ENCODE measurements at regions of chr16 and their contacts with region 1.

Region 1: GRCh38 chr16:49491771-49492761 is 118.5 kb downstream of the C16orf78 start:
- DNase-seq: no peak
- ATAC-seq: peak; percentile 89
- H3K4me3 ChIP-seq: no peak overlapping the region
- H3K27ac ChIP-seq: no peak overlapping the region
- H3K4me1 ChIP-seq: no peaks in the 10 kb centered on the region
- H3K27me3 ChIP-seq: no peaks in the 10 kb centered on the region
- CTCF ChIP-seq: peak; percentile 62 to 84 (median 78)
- EP300 ChIP-seq: no peak
- POLR2A ChIP-seq: no peak
- RAD21 ChIP-seq: peak; percentile 52

Region 2: DNA sequence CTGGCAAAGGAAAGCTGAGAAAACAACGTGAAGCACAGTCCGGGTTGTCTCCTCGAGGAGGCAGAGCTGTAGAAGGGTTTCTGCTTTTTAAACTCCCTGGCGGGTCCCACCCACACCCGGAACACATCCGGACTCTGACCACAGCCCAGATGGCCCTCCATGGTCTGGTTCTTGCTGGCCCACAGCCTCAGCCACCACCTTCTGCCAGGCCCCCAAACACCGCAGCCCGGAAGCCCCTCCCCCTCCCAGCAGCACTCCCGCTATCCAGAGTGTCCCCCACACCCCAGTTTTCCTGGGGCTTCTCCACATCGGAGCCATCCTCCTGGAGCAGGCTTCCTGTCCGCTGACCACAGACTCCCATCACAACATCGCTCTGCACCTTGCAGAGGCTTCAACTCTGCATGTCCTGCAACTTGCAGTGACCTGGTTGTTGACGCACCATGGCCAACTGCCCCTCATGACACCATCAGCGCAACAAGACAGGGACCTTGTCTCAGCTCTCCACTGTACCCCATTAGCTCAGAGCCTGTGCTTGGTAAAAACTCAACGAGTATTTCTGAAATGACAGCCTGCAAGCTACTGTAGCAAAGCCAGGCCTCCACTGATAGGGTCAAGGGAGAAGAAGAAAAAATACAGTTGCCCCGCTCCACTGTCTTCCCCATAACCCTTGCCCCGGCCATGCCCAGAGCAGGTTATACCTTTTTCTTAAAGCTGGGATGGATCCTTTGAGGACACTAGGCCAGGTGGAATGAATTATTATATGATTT is 11.4 kb after region 1 on chr16:
- CTCF ChIA-PET with region 1: no interaction called
- POLR2A ChIA-PET with region 1: no interaction called
- RAD21 ChIA-PET with region 1: no interaction called
- SMC1A ChIA-PET with region 1: no interaction called
- in situ Hi-C with region 1: no loop called
- intact Hi-C with region 1: no loop called
- DNase-seq: no peak
- ATAC-seq: peak; percentile 85
- H3K4me3 ChIP-seq: no peak overlapping the region
- H3K27ac ChIP-seq: no peak overlapping the region
- H3K4me1 ChIP-seq: peaks cover 14% of the 10 kb centered on the region
- H3K27me3 ChIP-seq: no peaks in the 10 kb centered on the region
- CTCF ChIP-seq: no peak
- EP300 ChIP-seq: no peak
- POLR2A ChIP-seq: no peak
- RAD21 ChIP-seq: no peak

Region 3: GRCh38 chr16:49580751-49581303 is 88.8 kb after region 1 on chr16:
- CTCF ChIA-PET with region 1: no interaction called
- POLR2A ChIA-PET with region 1: no interaction called
- RAD21 ChIA-PET with region 1: no interaction called
- SMC1A ChIA-PET with region 1: no interaction called
- in situ Hi-C with region 1: loop called (anchors 5 kb)
- intact Hi-C with region 1: no loop called
- DNase-seq: no peak
- ATAC-seq: no peak
- H3K4me3 ChIP-seq: no peak overlapping the region
- H3K27ac ChIP-seq: no peak overlapping the region
- H3K4me1 ChIP-seq: no peaks in the 10 kb centered on the region
- H3K27me3 ChIP-seq: no peaks in the 10 kb centered on the region
- CTCF ChIP-seq: no peak
- EP300 ChIP-seq: no peak
- POLR2A ChIP-seq: no peak
- RAD21 ChIP-seq: no peak

Region 4: GRCh38 chr16:49701789-49702494 is 209.9 kb after region 1 on chr16:
- CTCF ChIA-PET with region 1: no interaction called
- POLR2A ChIA-PET with region 1: no interaction called
- RAD21 ChIA-PET with region 1: no interaction called
- SMC1A ChIA-PET with region 1: no interaction called
- in situ Hi-C with region 1: no loop called
- intact Hi-C with region 1: loop called (anchors 10 kb)
- DNase-seq: no peak
- ATAC-seq: no peak
- H3K4me3 ChIP-seq: no peak overlapping the region
- H3K27ac ChIP-seq: no peak overlapping the region
- H3K4me1 ChIP-seq: peaks cover 7% of the 10 kb centered on the region
- H3K27me3 ChIP-seq: no peaks in the 10 kb centered on the region; a peak in 1 of 4 replicates
- CTCF ChIP-seq: no peak
- EP300 ChIP-seq: no peak
- POLR2A ChIP-seq: no peak
- RAD21 ChIP-seq: no peak

Region 5: GRCh38 chr16:49921791-49922456 is 429.9 kb after region 1 on chr16:
- CTCF ChIA-PET with region 1: no interaction called
- POLR2A ChIA-PET with region 1: no interaction called
- RAD21 ChIA-PET with region 1: no interaction called
- SMC1A ChIA-PET with region 1: no interaction called
- in situ Hi-C with region 1: no loop called
- intact Hi-C with region 1: loop called (anchors 5 kb)
- DNase-seq: no peak
- ATAC-seq: peak; percentile 85
- H3K4me3 ChIP-seq: no peak overlapping the region
- H3K27ac ChIP-seq: no peak overlapping the region
- H3K4me1 ChIP-seq: no peaks in the 10 kb centered on the region; the same call in 1 of the 2 replicates
- H3K27me3 ChIP-seq: no peaks in the 10 kb centered on the region
- CTCF ChIP-seq: peak; percentile 54 to 64 (median 61)
- EP300 ChIP-seq: no peak
- POLR2A ChIP-seq: no peak
- RAD21 ChIP-seq: peak; percentile 76

Measured in GM12878 (cell line).